ENCODE measurements at regions of chr6 and their contacts with region 1.

Region 1: DNA sequence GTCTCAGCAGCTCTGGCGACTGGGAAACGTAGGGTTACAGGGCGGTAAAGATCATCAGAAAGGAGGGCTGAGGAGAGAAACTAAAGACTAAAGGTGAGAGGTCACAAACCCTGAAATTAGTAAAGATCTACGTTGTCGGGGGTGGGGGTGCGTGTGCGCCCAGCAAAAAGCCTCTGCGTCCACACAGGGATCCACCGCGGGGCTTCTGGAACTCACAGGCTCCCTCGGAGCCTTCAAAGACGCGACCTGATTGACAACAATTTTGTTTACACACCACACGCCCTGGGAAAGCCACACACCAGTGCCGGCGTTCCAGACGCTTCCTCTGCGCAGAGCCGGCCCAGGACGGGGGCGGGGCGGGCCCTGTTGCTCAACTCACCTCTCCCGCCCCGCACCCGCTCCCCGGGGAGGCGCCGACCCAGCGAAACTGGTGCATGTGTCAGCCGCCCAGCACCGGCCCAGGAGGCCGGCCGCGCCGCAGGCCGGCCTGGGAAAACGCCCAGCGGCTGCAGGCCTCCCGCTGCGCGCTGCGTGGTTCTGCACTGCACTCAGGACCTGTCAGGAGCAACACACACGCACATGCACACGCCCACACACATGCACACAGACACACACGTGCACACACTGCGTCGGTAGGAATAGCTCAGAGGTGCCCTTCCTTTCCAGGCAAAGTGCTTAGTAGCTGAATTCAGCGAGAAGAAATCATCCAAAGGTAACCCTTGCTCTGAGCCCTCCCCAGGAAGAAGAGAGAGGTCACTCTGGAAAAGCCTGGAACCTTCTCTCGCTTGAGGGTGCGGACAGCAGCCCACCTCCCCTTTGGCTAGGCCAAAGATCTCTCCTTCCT is 57.2 kb upstream of the ARID1B start:
- DNase-seq: peak; percentile 65
- ATAC-seq: peak; percentile 89
- H3K4me3 ChIP-seq: peak overlapping the region; percentile 58
- H3K27ac ChIP-seq: peak overlapping the region; percentile 96
- H3K4me1 ChIP-seq: peaks cover 37% of the 10 kb centered on the region
- H3K27me3 ChIP-seq: no peaks in the 10 kb centered on the region
- CTCF ChIP-seq: no peak
- EP300 ChIP-seq: peak; percentile 23 to 59; a peak in 2 of 4 replicates
- POLR2A ChIP-seq: peak; percentile 77
- RAD21 ChIP-seq: no peak

Region 2: DNA sequence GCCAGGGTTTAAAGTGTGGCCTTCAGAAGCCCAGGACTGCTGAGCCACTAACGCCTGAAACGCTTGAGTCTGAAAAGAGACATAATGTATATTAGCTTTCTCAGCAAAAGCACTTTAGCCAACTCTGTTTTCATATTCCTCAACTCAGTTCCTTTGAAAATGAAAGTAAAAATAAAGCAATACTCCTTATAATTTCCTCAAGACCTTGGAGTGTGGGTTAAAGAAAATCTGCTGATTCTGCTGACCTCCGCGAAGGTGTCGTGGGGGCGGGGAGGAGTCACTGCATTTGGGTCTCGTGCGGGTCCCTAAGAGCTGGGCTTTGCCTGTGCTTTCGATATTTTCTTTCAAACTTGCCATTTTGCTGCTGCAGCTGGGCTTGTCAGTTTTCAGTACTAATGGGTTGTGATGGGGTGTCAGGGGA is 85.0 kb before region 1 on chr6:
- CTCF ChIA-PET with region 1: interaction called, 4 read pairs
- POLR2A ChIA-PET with region 1: interaction called, 14 read pairs
- RAD21 ChIA-PET with region 1: interaction called, 27 read pairs
- SMC1A ChIA-PET with region 1: interaction called, 30 read pairs
- in situ Hi-C with region 1: no loop called
- intact Hi-C with region 1: no loop called
- DNase-seq: no peak
- ATAC-seq: no peak
- H3K4me3 ChIP-seq: no peak overlapping the region; the same call in 1 of the 2 replicates
- H3K27ac ChIP-seq: peak overlapping the region; percentile 83
- H3K4me1 ChIP-seq: peaks cover 32% of the 10 kb centered on the region
- H3K27me3 ChIP-seq: no peaks in the 10 kb centered on the region
- CTCF ChIP-seq: no peak
- EP300 ChIP-seq: no peak
- POLR2A ChIP-seq: no peak
- RAD21 ChIP-seq: no peak

Region 3: DNA sequence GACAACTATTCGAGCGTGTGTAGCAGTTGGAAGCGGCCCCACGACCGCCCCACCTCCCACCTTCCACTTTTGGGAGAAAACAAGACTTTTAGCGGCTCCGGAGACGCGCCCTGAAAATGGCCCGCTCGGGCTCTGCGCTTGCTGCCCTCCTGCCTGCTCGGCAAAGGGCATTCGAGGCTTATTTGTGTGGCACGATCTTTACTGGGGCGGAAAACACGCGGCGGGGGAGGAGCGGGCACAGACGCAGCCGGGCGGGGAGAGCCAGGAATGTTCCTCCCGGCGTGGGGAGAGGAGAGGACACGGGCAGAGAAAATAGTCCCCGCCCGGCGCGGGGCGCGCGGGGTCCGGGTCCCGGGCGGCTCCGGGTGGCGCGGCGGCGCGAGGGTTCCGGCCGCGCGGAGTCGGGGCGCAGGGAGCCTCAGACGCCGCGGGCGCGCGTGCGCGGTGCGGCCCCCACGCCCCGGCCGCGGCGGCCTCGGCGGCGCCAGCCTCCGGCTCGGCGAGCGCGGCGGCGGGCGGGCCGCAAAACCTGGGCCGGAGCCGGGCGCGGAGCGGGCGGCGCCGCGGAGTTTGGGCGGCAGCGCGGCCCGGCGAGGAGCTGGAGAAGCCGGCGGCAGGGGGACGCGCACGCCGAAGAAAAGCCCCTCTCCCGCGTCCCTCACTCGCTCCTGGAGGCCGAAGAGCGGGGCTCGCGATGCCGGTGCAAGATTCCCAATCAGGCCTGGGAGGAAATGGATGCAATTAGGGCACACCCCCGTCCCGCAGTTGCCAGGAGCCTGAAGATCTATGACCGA is 32.8 kb before region 1 on chr6:
- CTCF ChIA-PET with region 1: interaction called, 8 read pairs
- POLR2A ChIA-PET with region 1: interaction called, 29 read pairs
- RAD21 ChIA-PET with region 1: interaction called, 72 read pairs
- SMC1A ChIA-PET with region 1: interaction called, 52 read pairs
- in situ Hi-C with region 1: no loop called
- intact Hi-C with region 1: loop called (anchors 5 kb)
- DNase-seq: no peak
- ATAC-seq: peak; percentile 69
- H3K4me3 ChIP-seq: peak overlapping the region; percentile 93
- H3K27ac ChIP-seq: peak overlapping the region; percentile 98
- H3K4me1 ChIP-seq: peaks cover 48% of the 10 kb centered on the region
- H3K27me3 ChIP-seq: no peaks in the 10 kb centered on the region
- CTCF ChIP-seq: no peak
- EP300 ChIP-seq: peak in 1 of 2 experiments; percentile 27; a peak in 1 of 4 replicates
- POLR2A ChIP-seq: peak; percentile 85
- RAD21 ChIP-seq: no peak; the same call in 1 of the 2 replicates

Region 4: DNA sequence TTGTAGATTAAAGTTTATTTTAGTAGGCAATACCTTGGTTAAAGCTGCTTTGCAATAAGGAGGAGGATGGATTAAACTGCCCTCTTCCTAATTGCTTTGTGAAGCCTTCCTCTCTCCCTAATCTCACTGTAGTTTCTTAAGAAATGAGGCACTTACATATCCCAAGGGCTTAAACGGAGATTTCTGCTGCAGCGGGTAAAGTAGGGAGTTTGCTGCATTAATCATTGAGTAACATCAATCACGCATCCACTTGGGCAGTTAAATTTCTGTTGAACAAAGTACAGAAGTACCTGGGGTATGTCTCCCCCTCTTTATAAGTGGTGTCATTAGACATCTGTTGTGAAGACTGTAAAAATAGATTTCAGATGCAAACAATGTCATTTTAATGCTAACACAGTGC is 27.8 kb after region 1 on chr6:
- CTCF ChIA-PET with region 1: interaction called, 42 read pairs
- POLR2A ChIA-PET with region 1: interaction called, 36 read pairs
- RAD21 ChIA-PET with region 1: interaction called, 119 read pairs
- SMC1A ChIA-PET with region 1: interaction called, 121 read pairs
- in situ Hi-C with region 1: no loop called
- intact Hi-C with region 1: loop called (anchors 2 kb)
- DNase-seq: no peak
- ATAC-seq: no peak
- H3K4me3 ChIP-seq: no peak overlapping the region
- H3K27ac ChIP-seq: no peak overlapping the region
- H3K4me1 ChIP-seq: peaks cover 6% of the 10 kb centered on the region
- H3K27me3 ChIP-seq: no peaks in the 10 kb centered on the region
- CTCF ChIP-seq: no peak
- EP300 ChIP-seq: no peak
- POLR2A ChIP-seq: no peak
- RAD21 ChIP-seq: no peak

Region 5: GRCh38 chr6:156767603-156768467 is 47.9 kb after region 1 on chr6:
- CTCF ChIA-PET with region 1: interaction called, 5 read pairs
- POLR2A ChIA-PET with region 1: interaction called, 19 read pairs
- RAD21 ChIA-PET with region 1: interaction called, 71 read pairs
- SMC1A ChIA-PET with region 1: interaction called, 54 read pairs
- in situ Hi-C with region 1: no loop called
- intact Hi-C with region 1: no loop called
- DNase-seq: peak; percentile 90
- ATAC-seq: peak; percentile 96
- H3K4me3 ChIP-seq: peak overlapping the region; percentile 56; the same call in 1 of the 2 replicates
- H3K27ac ChIP-seq: peak overlapping the region; percentile 63
- H3K4me1 ChIP-seq: peaks cover 19% of the 10 kb centered on the region
- H3K27me3 ChIP-seq: no peaks in the 10 kb centered on the region
- CTCF ChIP-seq: no peak
- EP300 ChIP-seq: peak; percentile 20 to 54; a peak in 3 of 4 replicates
- POLR2A ChIP-seq: no peak
- RAD21 ChIP-seq: 0 out of 2 replicates have a peak, but pooled peaks have one; percentile 15

Region 6: GRCh38 chr6:156781861-156782631 is 62.1 kb after region 1 on chr6:
- CTCF ChIA-PET with region 1: interaction called, 6 read pairs
- POLR2A ChIA-PET with region 1: interaction called, 19 read pairs
- RAD21 ChIA-PET with region 1: interaction called, 32 read pairs
- SMC1A ChIA-PET with region 1: interaction called, 26 read pairs
- in situ Hi-C with region 1: no loop called
- intact Hi-C with region 1: loop called (anchors 2 kb)
- DNase-seq: no peak
- ATAC-seq: no peak
- H3K4me3 ChIP-seq: peak overlapping the region; percentile 89
- H3K27ac ChIP-seq: peak overlapping the region; percentile 93
- H3K4me1 ChIP-seq: peaks cover 6% of the 10 kb centered on the region; the same call in 1 of the 2 replicates
- H3K27me3 ChIP-seq: no peaks in the 10 kb centered on the region
- CTCF ChIP-seq: no peak
- EP300 ChIP-seq: no peak
- POLR2A ChIP-seq: no peak
- RAD21 ChIP-seq: no peak

Region 7: GRCh38 chr6:156933201-156934068 is 213.5 kb after region 1 on chr6:
- CTCF ChIA-PET with region 1: no interaction called
- POLR2A ChIA-PET with region 1: no interaction called
- RAD21 ChIA-PET with region 1: interaction called, 10 read pairs
- SMC1A ChIA-PET with region 1: interaction called, 6 read pairs
- in situ Hi-C with region 1: no loop called
- intact Hi-C with region 1: no loop called
- DNase-seq: no peak
- ATAC-seq: peak; percentile 66
- H3K4me3 ChIP-seq: no peak overlapping the region
- H3K27ac ChIP-seq: no peak overlapping the region
- H3K4me1 ChIP-seq: no peaks in the 10 kb centered on the region
- H3K27me3 ChIP-seq: no peaks in the 10 kb centered on the region
- CTCF ChIP-seq: peak in 2 of 3 experiments; percentile 3 to 36; a peak in 4 of 6 replicates
- EP300 ChIP-seq: no peak
- POLR2A ChIP-seq: no peak
- RAD21 ChIP-seq: peak; percentile 23; the same call in 1 of the 2 replicates